ENCODE measurements at regions of chr3 and their contacts with region 1.

Region 1: GRCh38 chr3:179929091-179929529 is 107.6 kb downstream of the PEX5L start:
- DNase-seq: peak; percentile 56
- H3K4me3 ChIP-seq: peak overlapping the region in 1 of 2 experiments; percentile 46; a peak in 1 of 4 replicates
- H3K27ac ChIP-seq: no peak overlapping the region
- H3K4me1 ChIP-seq: no peaks in the 10 kb centered on the region; a peak in 1 of 4 replicates
- H3K27me3 ChIP-seq: no peaks in the 10 kb centered on the region
- CTCF ChIP-seq: peak; percentile 87
- EP300 ChIP-seq: no peak
- RAD21 ChIP-seq: peak; percentile 75

Region 2: DNA sequence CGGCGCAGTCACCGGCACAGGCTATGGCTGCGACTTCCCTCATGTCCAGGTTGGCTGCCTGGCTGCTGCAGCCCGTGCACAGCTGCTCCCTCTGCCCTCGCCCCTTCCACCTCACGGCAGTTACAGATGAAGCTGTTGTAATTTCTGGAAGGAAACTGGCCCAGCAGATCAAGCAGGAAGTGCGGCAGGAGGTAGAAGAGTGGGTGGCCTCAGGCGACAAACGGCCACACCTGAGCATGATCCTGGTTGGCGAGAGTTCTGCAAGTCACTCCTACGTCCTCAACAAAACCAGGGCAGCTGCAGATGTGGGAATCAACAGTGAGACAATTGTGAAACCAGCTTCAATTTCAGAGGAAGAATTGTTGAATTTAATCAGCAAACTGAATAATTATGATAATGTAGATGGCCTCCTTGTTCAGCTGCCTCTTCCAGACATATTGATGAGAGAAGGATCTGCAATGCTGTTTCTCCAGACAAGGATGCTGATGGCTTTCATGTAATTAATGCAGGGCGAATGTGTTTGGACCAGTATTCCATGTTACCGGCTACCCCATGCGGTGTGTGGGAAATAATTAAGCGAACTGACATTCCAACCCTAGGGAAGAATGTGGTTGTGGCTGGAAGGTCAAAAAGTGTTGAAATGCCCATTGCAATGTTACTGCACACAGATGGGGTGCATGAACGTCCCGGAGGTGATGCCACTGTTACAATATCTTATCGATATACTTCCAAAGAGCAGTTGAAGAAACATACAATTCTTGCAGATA is 464.6 kb before region 1 on chr3:
- CTCF ChIA-PET with region 1: no interaction called
- POLR2A ChIA-PET with region 1: no interaction called
- DNase-seq: no peak
- H3K4me3 ChIP-seq: no peak overlapping the region
- H3K27ac ChIP-seq: no peak overlapping the region
- H3K4me1 ChIP-seq: no peaks in the 10 kb centered on the region
- H3K27me3 ChIP-seq: no peaks in the 10 kb centered on the region; the same call in 1 of the 2 replicates
- CTCF ChIP-seq: no peak
- EP300 ChIP-seq: no peak
- RAD21 ChIP-seq: no peak

Region 3: GRCh38 chr3:179768080-179768479 is 161.0 kb before region 1 on chr3:
- CTCF ChIA-PET with region 1: interaction called, 11 read pairs
- POLR2A ChIA-PET with region 1: no interaction called
- DNase-seq: peak; percentile 79
- H3K4me3 ChIP-seq: peak overlapping the region in 1 of 2 experiments; percentile 47; a peak in 1 of 4 replicates
- H3K27ac ChIP-seq: peak overlapping the region in 1 of 2 experiments; percentile 29; a peak in 2 of 4 replicates
- H3K4me1 ChIP-seq: peaks cover 20 to 46% of the 10 kb centered on the region in 2 experiments
- H3K27me3 ChIP-seq: no peaks in the 10 kb centered on the region
- CTCF ChIP-seq: peak; percentile 84
- EP300 ChIP-seq: peak; percentile 39 to 65; a peak in 2 of 4 replicates
- RAD21 ChIP-seq: peak; percentile 77

Region 4: GRCh38 chr3:179811321-179812095 is 117.6 kb before region 1 on chr3:
- CTCF ChIA-PET with region 1: interaction called, 14 read pairs
- POLR2A ChIA-PET with region 1: no interaction called
- DNase-seq: peak; percentile 73
- H3K4me3 ChIP-seq: peak overlapping the region in 1 of 2 experiments; percentile 27; a peak in 1 of 4 replicates
- H3K27ac ChIP-seq: peak overlapping the region in 1 of 2 experiments; percentile 86; a peak in 2 of 4 replicates
- H3K4me1 ChIP-seq: no peaks in the 10 kb centered on the region
- H3K27me3 ChIP-seq: no peaks in the 10 kb centered on the region
- CTCF ChIP-seq: peak; percentile 73
- EP300 ChIP-seq: 0 out of 4 replicates have a peak, but pooled peaks of 1 of the 2 experiments have one; percentile 6
- RAD21 ChIP-seq: peak; percentile 91

Region 5: DNA sequence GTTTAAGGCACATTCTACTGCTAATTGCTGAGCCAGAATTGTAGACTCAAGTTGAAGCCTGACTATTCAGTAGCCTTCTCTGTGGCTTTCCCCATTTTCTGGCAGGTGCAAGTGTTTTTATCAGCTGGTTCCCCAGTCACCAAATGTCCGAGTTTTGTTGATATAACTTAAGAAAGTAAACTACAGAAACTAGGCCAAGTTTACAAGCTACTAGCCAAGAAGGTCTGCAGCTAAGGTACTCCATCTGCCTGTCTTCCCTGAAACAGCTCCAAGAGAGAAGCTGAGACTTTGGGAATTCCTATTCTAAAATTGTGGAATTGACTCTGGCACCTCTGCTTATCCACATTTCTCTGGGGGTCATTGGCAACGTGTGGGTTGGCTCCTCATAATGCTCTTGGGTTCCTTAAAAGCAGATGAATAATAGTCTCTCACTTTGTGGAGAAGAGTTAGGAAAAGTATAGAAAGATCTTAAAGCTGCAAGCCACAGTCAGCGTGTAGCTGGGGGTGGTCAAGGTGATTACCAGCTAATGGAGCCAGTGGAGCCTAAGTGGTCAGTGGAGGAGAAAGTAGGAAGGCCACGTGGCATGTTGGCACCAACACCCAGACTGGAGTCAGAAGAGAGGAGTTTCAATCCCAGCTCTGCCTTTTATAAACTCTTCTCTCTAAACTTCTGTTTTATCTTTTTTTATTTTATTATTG is 21.2 kb before region 1 on chr3:
- CTCF ChIA-PET with region 1: interaction called, 11 read pairs
- POLR2A ChIA-PET with region 1: no interaction called
- DNase-seq: no peak
- H3K4me3 ChIP-seq: no peak overlapping the region
- H3K27ac ChIP-seq: no peak overlapping the region
- H3K4me1 ChIP-seq: no peaks in the 10 kb centered on the region
- H3K27me3 ChIP-seq: no peaks in the 10 kb centered on the region
- CTCF ChIP-seq: no peak
- EP300 ChIP-seq: no peak
- RAD21 ChIP-seq: no peak

Region 6: GRCh38 chr3:179942553-179943075 is 13.5 kb after region 1 on chr3:
- CTCF ChIA-PET with region 1: interaction called, 21 read pairs
- POLR2A ChIA-PET with region 1: no interaction called
- DNase-seq: no peak
- H3K4me3 ChIP-seq: peak overlapping the region; percentile 48 to 52
- H3K27ac ChIP-seq: no peak overlapping the region
- H3K4me1 ChIP-seq: peaks cover 0 to 3% of the 10 kb centered on the region in 2 experiments; a peak in 1 of 4 replicates
- H3K27me3 ChIP-seq: no peaks in the 10 kb centered on the region
- CTCF ChIP-seq: no peak
- EP300 ChIP-seq: no peak
- RAD21 ChIP-seq: no peak

Measured in SK-N-SH (cell line).